Ovary (tissue), 10 donors: ENCODE measurements at regions of chr19 and their contacts with region 1.

Region 1: GRCh38 chr19:13718733-13719132 is 45.6 kb upstream of the MRI1 start:
- DNase-seq: no peak
- H3K4me3 ChIP-seq: no peak overlapping the region
- H3K27ac ChIP-seq: no peak overlapping the region
- H3K4me1 ChIP-seq: no peaks in the 10 kb centered on the region
- H3K27me3 ChIP-seq: no peaks in the 10 kb centered on the region
- CTCF ChIP-seq: no peak
- EP300 ChIP-seq: no peak
- POLR2A ChIP-seq: no peak

Region 2: GRCh38 chr19:13588957-13589833 is 129.5 kb before region 1 on chr19:
- intact Hi-C with region 1: loop called in 3 of 4 experiments (anchors 5 to 10 kb)
- DNase-seq: peak; percentile 40 to 76 (median 62)
- H3K4me3 ChIP-seq: no peak overlapping the region
- H3K27ac ChIP-seq: no peak overlapping the region
- H3K4me1 ChIP-seq: no peaks in the 10 kb centered on the region
- H3K27me3 ChIP-seq: no peaks in the 10 kb centered on the region
- CTCF ChIP-seq: peak; percentile 50 to 80 (median 54)
- EP300 ChIP-seq: no peak
- POLR2A ChIP-seq: no peak